ENCODE measurements at regions of chr11 and their contacts with region 1.

Region 1: DNA sequence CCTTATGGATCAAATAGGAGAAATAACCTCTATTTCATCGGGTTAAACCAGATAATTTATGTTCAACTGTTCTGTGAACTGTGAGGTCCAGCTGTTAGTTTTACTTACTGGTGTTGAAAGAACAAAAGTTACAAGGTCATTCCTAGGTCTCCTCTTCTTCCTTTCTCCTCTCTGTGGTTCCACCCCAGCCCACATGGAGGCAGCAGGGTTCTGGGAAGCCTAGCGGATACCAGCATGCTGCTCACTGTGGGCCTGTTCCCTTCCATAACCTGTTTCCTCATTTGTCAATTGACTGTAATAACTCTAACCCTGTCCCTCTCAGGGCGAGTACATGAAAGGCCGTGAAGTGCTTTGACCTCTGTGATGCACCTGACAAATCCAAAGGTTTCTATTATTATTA is 27.8 kb downstream of the RELT start:
- DNase-seq: peak; percentile 76
- H3K4me3 ChIP-seq: no peak overlapping the region
- H3K27ac ChIP-seq: peak overlapping the region; percentile 58
- H3K4me1 ChIP-seq: peaks cover 25% of the 10 kb centered on the region
- H3K27me3 ChIP-seq: no peaks in the 10 kb centered on the region
- CTCF ChIP-seq: peak; percentile 87

Region 2: DNA sequence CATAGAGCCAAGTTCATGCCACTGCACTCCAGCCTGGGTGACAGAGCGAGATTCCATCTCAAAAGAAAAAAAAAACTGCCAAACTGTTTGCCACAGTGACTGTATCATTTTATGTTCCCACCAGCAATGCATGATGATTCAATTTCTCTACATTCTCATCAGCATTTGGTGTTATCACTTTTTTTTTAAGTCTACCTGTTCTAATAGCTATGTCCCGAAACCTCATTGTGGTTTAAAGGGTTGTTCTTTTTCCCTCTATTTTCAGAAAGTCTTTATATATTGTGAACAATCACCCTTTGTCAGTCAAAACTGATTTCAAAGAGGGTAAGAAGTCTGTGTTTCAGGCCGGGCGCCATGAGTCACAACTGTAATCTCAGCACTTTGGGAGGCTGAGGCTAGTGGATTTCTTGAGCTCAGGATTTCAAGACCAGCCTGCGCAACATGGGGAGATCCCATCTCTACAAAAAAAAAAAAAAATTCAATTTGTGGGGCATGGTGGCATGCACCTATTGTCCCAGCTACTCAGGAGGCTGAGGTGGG is 208.6 kb after region 1 on chr11:
- intact Hi-C with region 1: loop called (anchors 10 kb)
- DNase-seq: no peak
- H3K4me3 ChIP-seq: no peak overlapping the region
- H3K27ac ChIP-seq: no peak overlapping the region
- H3K4me1 ChIP-seq: no peaks in the 10 kb centered on the region
- H3K27me3 ChIP-seq: no peaks in the 10 kb centered on the region
- CTCF ChIP-seq: no peak

Region 3: DNA sequence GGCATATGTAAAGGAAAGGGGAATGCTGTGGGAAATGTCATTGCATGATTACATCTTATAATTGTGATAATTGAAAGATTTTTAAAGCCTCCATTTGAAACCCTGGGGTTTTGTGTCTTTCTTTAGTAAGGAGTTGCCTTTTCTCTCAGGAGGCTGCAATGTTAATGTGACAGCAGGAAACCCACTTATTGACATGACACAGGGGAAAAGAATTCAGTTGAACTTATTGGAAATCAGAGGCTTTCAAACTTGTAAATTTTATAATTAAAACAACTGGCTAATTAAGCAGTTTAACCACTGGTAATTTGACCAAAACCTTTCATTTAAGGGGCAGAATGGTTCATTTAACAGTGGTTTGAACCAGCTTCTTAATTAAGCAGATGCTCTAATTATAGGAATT is 414.8 kb after region 1 on chr11:
- intact Hi-C with region 1: no loop called
- DNase-seq: no peak
- H3K4me3 ChIP-seq: no peak overlapping the region
- H3K27ac ChIP-seq: no peak overlapping the region
- H3K4me1 ChIP-seq: peaks cover 12% of the 10 kb centered on the region
- H3K27me3 ChIP-seq: no peaks in the 10 kb centered on the region
- CTCF ChIP-seq: no peak

Measured in left ventricle myocardium inferior (tissue), 1 donor.